Naive thymus-derived CD4-positive, alpha-beta T cell (primary cell): ENCODE measurements at regions of chr20 and their contacts with region 1.

Region 1: GRCh38 chr20:63657937-63658748 is at the start of gene RTEL1:
- DNase-seq: peak; percentile 79 to 99 (median 89)
- ATAC-seq: peak; percentile 90
- H3K4me3 ChIP-seq: peak within 1 kb of the TSS; percentile 100
- H3K4me3 Mint-ChIP-seq: peak within 1 kb of the TSS; percentile 86 to 97 (median 94)
- H3K27ac ChIP-seq: peak within 1 kb of the TSS; percentile 83
- H3K27ac Mint-ChIP-seq: peak within 1 kb of the TSS; percentile 93 to 97 (median 95)
- H3K4me1 ChIP-seq: peaks cover 18 to 20% of the 10 kb centered on the region in 2 donors
- H3K4me1 Mint-ChIP-seq: peaks cover 14 to 57% (median 36%) of the 10 kb centered on the region in 7 donors
- H3K27me3 ChIP-seq: no peaks in the 10 kb centered on the region
- H3K27me3 Mint-ChIP-seq: peaks cover 0 to 2% (median 0%) of the 10 kb centered on the region in 5 donors
- total RNA-seq, gene RTEL1: 28.4 to 47.2 (median 32.4) TPM

Region 2: GRCh38 chr20:63520504-63520933 is 137.6 kb before region 1 on chr20 and contains the start of gene PPDPF:
- CTCF ChIA-PET with region 1: no interaction called
- POLR2A ChIA-PET with region 1: interaction called, 6 read pairs
- intact Hi-C with region 1: loop called in 1 of 2 experiments (anchors 1 kb)
- DNase-seq: peak; percentile 76 to 92 (median 84)
- ATAC-seq: peak; percentile 96
- H3K4me3 ChIP-seq: peak within 1 kb of the TSS; percentile 86
- H3K4me3 Mint-ChIP-seq: peak within 1 kb of the TSS; percentile 65 to 89 (median 81)
- H3K27ac ChIP-seq: peak within 1 kb of the TSS; percentile 88
- H3K27ac Mint-ChIP-seq: peak within 1 kb of the TSS in 7 of 9 donors; percentile 51 to 88 (median 79)
- H3K4me1 ChIP-seq: peaks cover 11 to 14% of the 10 kb centered on the region in 2 donors
- H3K4me1 Mint-ChIP-seq: peaks cover 4 to 22% (median 9%) of the 10 kb centered on the region in 7 donors
- H3K27me3 ChIP-seq: no peaks in the 10 kb centered on the region
- H3K27me3 Mint-ChIP-seq: peaks cover 0 to 7% (median 0%) of the 10 kb centered on the region in 5 donors
- total RNA-seq, gene PPDPF: 138 to 225 (median 184) TPM

Region 3: GRCh38 chr20:63612276-63612928 is 45.7 kb before region 1 on chr20:
- CTCF ChIA-PET with region 1: no interaction called
- POLR2A ChIA-PET with region 1: no interaction called
- intact Hi-C with region 1: loop called in 1 of 2 experiments (anchors 1 kb)
- DNase-seq: no peak
- ATAC-seq: peak; percentile 84
- H3K4me3 ChIP-seq: no peak overlapping the region
- H3K4me3 Mint-ChIP-seq: no peak overlapping the region
- H3K27ac ChIP-seq: no peak overlapping the region
- H3K27ac Mint-ChIP-seq: no peak overlapping the region
- H3K4me1 ChIP-seq: no peaks in the 10 kb centered on the region
- H3K4me1 Mint-ChIP-seq: peaks cover 0 to 20% (median 11%) of the 10 kb centered on the region in 7 donors
- H3K27me3 ChIP-seq: no peaks in the 10 kb centered on the region
- H3K27me3 Mint-ChIP-seq: no peaks in the 10 kb centered on the region

Region 4: DNA sequence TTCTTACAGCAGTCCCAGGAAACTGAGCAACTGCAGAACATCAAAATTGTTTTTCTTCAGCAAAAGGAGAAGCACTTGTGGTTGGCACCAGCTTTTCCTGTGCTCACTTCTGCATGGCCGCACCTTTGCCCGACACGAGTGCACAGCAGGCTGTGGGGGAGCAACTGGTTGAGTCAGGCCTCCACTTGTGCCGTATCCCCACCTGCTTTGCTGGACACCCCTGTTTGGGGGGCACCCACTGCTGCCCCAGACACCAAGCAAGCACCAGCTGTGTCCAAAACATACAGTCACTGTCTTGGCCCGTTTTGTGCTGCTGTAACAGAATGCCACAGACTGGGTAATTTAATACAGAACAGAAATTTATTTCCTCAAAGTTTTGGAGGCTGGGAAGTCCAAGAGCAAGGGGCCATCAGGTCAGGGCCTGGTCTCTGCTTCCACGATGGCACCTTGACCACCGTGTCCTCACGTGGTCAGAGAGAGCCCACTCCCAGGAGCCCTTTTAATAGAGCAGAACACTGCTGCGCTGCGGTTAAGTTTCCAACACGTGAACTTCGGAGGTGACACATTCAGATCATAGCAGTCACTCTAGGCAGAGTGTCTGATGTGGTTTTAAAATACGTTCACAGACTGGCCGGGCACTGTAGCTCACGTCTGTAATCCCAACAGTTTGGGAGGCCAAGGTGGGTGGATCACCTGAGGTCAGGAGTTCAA is 22.6 kb before region 1 on chr20:
- CTCF ChIA-PET with region 1: no interaction called
- POLR2A ChIA-PET with region 1: interaction called, 53 read pairs
- intact Hi-C with region 1: loop called in 1 of 2 experiments (anchors 2 kb)
- DNase-seq: peak in 8 of 9 donors; percentile 67 to 92 (median 89)
- ATAC-seq: peak; percentile 81
- H3K4me3 ChIP-seq: peak overlapping the region; percentile 50
- H3K4me3 Mint-ChIP-seq: peak overlapping the region; percentile 77 to 89 (median 82)
- H3K27ac ChIP-seq: peak overlapping the region; percentile 78
- H3K27ac Mint-ChIP-seq: peak overlapping the region; percentile 95 to 100 (median 98)
- H3K4me1 ChIP-seq: peaks cover 58 to 73% of the 10 kb centered on the region in 2 donors
- H3K4me1 Mint-ChIP-seq: peaks cover 24 to 78% (median 53%) of the 10 kb centered on the region in 7 donors
- H3K27me3 ChIP-seq: no peaks in the 10 kb centered on the region
- H3K27me3 Mint-ChIP-seq: no peaks in the 10 kb centered on the region

Region 5: GRCh38 chr20:63682384-63683139 is 24.4 kb after region 1 on chr20:
- CTCF ChIA-PET with region 1: no interaction called
- POLR2A ChIA-PET with region 1: no interaction called
- intact Hi-C with region 1: no loop called
- DNase-seq: no peak
- ATAC-seq: no peak
- H3K4me3 ChIP-seq: no peak overlapping the region
- H3K4me3 Mint-ChIP-seq: no peak overlapping the region
- H3K27ac ChIP-seq: no peak overlapping the region
- H3K27ac Mint-ChIP-seq: no peak overlapping the region
- H3K4me1 ChIP-seq: peaks cover 0 to 13% of the 10 kb centered on the region in 2 donors
- H3K4me1 Mint-ChIP-seq: peaks cover 0 to 10% (median 5%) of the 10 kb centered on the region in 7 donors
- H3K27me3 ChIP-seq: no peaks in the 10 kb centered on the region
- H3K27me3 Mint-ChIP-seq: no peaks in the 10 kb centered on the region

Region 6: GRCh38 chr20:63739130-63740069 is 81.3 kb after region 1 on chr20 and contains the start of gene SLC2A4RG:
- CTCF ChIA-PET with region 1: no interaction called
- POLR2A ChIA-PET with region 1: interaction called, 13 read pairs
- intact Hi-C with region 1: loop called in 1 of 2 experiments (anchors 1 kb)
- DNase-seq: peak; percentile 49 to 86 (median 69)
- ATAC-seq: peak; percentile 62
- H3K4me3 ChIP-seq: peak within 1 kb of the TSS; percentile 99
- H3K4me3 Mint-ChIP-seq: peak within 1 kb of the TSS; percentile 33 to 92 (median 80)
- H3K27ac ChIP-seq: peak within 1 kb of the TSS; percentile 71
- H3K27ac Mint-ChIP-seq: peak within 1 kb of the TSS in 1 of 9 donors; percentile 38
- H3K4me1 ChIP-seq: peaks cover 21 to 29% of the 10 kb centered on the region in 2 donors
- H3K4me1 Mint-ChIP-seq: peaks cover 7 to 20% (median 16%) of the 10 kb centered on the region in 7 donors
- H3K27me3 ChIP-seq: no peaks in the 10 kb centered on the region
- H3K27me3 Mint-ChIP-seq: no peaks in the 10 kb centered on the region
- total RNA-seq, gene SLC2A4RG: 88.7 to 136 (median 111) TPM

Region 7: DNA sequence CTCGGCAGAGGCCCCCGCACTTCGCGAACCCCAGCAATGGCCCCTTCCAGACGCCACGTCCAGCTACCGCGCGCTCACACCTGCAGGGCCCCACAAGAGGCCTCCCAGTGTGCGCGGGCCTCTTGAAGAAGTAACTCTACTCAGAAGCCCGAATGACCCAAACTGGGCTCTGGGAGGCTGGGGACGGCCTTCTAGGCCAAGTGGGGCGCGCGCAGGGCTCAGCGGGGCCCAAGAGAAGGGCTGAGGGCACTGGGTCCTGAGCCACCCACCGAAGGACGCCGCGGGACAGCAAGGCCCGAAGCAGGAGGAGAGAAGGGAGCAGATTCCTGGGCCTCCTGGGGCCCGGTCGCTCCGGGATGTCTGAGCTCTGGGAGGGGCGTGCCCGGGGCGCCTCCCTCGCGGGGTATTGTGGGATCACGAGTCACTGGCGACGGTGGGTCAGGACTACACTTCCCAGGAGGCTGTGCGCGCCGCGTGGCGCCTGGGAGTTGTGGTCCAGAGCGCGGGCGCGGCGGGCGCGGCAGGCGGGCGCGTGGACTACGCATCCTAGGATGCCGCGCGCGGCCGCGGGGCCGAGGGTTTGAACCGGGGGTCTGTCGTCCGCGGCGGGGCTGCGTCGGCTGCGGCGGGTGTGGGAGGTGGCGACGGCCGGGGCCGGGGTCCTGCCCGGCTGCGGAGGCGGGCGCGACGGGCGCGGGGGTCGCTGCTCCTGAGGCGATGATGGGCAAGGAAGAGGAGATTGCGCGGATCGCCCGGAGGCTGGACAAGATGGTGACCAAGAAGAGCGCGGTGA is 404.6 kb after region 1 on chr20 and contains the start of gene TCEA2:
- CTCF ChIA-PET with region 1: no interaction called
- POLR2A ChIA-PET with region 1: no interaction called
- intact Hi-C with region 1: loop called in 1 of 2 experiments (anchors 1 kb)
- DNase-seq: peak; percentile 85 to 95 (median 90)
- ATAC-seq: peak; percentile 97
- H3K4me3 ChIP-seq: peak within 1 kb of the TSS; percentile 56
- H3K4me3 Mint-ChIP-seq: peak within 1 kb of the TSS; percentile 83 to 95 (median 88)
- H3K27ac ChIP-seq: peak within 1 kb of the TSS; percentile 74
- H3K27ac Mint-ChIP-seq: peak within 1 kb of the TSS; percentile 69 to 95 (median 79)
- H3K4me1 ChIP-seq: peaks cover 23 to 40% of the 10 kb centered on the region in 2 donors
- H3K4me1 Mint-ChIP-seq: peaks cover 30 to 54% (median 37%) of the 10 kb centered on the region in 7 donors
- H3K27me3 ChIP-seq: no peaks in the 10 kb centered on the region
- H3K27me3 Mint-ChIP-seq: no peaks in the 10 kb centered on the region
- total RNA-seq, gene TCEA2: 35.5 to 73.2 (median 47.3) TPM

Region 8: GRCh38 chr20:64238851-64239387 is 580.8 kb after region 1 on chr20:
- CTCF ChIA-PET with region 1: no interaction called
- POLR2A ChIA-PET with region 1: no interaction called
- intact Hi-C with region 1: no loop called
- DNase-seq: no peak
- ATAC-seq: no peak
- H3K4me3 ChIP-seq: no peak overlapping the region
- H3K4me3 Mint-ChIP-seq: no peak overlapping the region
- H3K27ac ChIP-seq: no peak overlapping the region
- H3K27ac Mint-ChIP-seq: no peak overlapping the region
- H3K4me1 ChIP-seq: no peaks in the 10 kb centered on the region
- H3K4me1 Mint-ChIP-seq: peaks cover 0 to 7% (median 3%) of the 10 kb centered on the region in 7 donors
- H3K27me3 ChIP-seq: no peaks in the 10 kb centered on the region
- H3K27me3 Mint-ChIP-seq: peaks cover 0 to 7% (median 3%) of the 10 kb centered on the region in 5 donors